ENCODE measurements at regions of chr15 and their contacts with region 1.

Region 1: DNA sequence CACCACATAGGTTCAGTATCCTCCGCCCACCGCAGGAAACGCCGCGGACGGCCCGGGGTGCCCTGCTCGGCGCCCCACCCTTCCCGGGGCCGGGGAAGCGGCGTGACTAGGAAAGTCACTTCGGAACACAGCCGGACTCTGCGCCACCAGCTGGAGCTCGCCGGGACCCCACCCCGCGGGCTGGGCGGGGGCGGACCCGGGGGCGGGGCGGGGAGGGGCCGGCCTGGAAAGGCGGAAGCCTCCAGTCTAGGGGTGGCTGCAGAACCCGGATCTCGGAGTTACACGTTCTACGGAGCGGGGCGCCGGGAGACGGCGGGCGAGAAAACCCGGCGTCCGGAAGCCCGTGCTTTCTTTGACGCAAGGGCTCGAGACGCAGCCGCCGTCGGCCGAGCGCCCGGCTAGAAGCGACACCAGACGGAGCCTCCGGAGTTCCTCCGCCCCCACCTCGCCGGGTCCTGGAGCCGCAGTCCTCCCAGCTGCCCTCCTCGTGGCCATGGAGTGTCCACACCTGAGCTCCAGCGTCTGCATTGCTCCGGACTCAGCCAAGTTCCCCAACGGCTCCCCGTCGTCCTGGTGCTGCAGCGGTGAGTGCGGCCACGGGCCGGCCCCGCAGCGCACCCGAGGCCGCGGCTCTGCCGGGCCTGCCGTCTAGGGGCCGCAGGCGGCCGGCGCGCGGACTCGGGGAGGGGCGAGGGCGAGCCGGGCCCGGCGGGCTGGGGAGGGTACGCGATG is at the start of gene USP3:
- DNase-seq: peak; percentile 93 to 95
- H3K4me3 ChIP-seq: peak within 1 kb of the TSS; percentile 97
- H3K4me3 Mint-ChIP-seq: peak within 1 kb of the TSS; percentile 83
- H3K27ac Mint-ChIP-seq: peak within 1 kb of the TSS; percentile 94
- H3K4me1 ChIP-seq: peaks cover 25% of the 10 kb centered on the region
- H3K4me1 Mint-ChIP-seq: peaks cover 32% of the 10 kb centered on the region
- H3K27me3 ChIP-seq: no peaks in the 10 kb centered on the region
- H3K27me3 Mint-ChIP-seq: no peaks in the 10 kb centered on the region
- CTCF ChIP-seq: peak; percentile 14 to 35
- total RNA-seq, gene USP3: 54.2 and 58.6 TPM in 2 replicates

Region 2: DNA sequence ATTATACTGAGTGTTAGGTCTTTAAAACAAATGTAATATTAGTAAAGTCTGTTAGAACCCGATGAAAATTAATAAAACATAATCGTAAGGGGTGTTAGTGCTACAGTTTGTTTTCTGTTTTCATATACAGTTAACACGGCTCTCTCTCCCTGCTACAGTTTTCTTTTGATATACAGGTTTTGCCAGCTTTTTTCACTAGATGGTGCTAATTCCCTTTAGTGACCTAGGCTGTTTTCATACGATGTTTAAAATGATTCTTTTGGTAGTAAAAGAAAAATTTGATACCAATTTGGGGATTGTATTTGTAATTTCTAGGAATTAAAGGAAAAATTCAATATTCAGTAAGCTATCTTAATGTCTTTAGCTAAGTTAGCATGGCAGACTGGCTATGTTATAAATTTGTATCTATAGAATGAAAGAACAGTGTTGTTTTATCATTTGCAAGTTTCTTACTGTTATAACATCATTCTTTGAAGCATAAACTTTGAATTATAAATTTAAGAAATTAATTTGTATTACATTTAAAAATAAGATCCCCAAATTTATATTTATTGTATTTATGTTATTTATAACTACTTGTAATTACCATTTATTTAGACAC is 215.5 kb before region 1 on chr15:
- CTCF ChIA-PET with region 1: no interaction called
- POLR2A ChIA-PET with region 1: no interaction called
- intact Hi-C with region 1: loop called (anchors 1 kb)
- DNase-seq: peak in 1 of 2 experiments; percentile 52
- H3K4me3 ChIP-seq: no peak overlapping the region
- H3K4me3 Mint-ChIP-seq: no peak overlapping the region
- H3K27ac Mint-ChIP-seq: no peak overlapping the region
- H3K4me1 ChIP-seq: no peaks in the 10 kb centered on the region
- H3K4me1 Mint-ChIP-seq: peaks cover 6% of the 10 kb centered on the region
- H3K27me3 ChIP-seq: no peaks in the 10 kb centered on the region
- H3K27me3 Mint-ChIP-seq: no peaks in the 10 kb centered on the region
- CTCF ChIP-seq: peak; percentile 50 to 57

Region 3: DNA sequence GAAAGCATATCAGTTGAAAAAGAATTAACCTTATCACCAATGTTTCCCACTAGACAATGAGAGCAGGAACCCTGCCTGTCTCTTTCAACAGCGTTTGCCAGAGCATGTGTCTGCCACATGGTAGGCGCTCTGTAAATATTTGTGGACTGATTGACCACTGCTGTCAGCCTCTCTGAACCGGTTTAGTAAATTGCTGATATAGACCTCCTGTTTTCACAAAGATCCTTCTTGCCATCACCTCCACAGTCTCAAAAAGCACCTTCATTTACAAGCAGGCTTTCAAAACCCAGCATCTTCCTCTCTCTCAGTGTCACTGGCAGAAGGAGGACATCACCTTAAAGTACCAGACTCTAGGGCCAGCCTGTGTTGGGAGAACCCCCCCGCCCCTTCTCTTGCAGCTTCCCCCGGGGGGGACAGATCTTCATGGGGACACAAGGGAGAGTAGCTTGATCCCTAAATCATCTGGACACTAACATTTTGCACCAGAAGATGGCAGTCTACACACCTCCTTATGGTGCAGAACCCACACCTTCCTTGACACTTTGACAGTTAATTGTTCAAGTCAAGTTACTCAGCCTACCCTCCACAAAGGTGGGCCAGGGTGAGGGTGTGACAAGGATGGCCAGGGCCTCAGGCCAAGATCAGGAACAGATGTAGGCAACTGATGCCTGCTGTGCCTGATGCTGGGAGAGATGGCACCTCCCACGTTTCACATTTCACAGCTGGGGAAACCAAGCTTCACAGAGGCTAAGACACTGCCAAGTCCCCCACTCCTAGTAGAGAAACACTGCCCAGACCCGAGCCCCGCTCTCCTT is 37.8 kb before region 1 on chr15:
- CTCF ChIA-PET with region 1: interaction called, 18 read pairs
- POLR2A ChIA-PET with region 1: interaction called, 4 read pairs
- intact Hi-C with region 1: no loop called
- DNase-seq: peak; percentile 53 to 68
- H3K4me3 ChIP-seq: no peak overlapping the region
- H3K4me3 Mint-ChIP-seq: peak overlapping the region; percentile 51
- H3K27ac Mint-ChIP-seq: peak overlapping the region; percentile 35
- H3K4me1 ChIP-seq: peaks cover 31% of the 10 kb centered on the region
- H3K4me1 Mint-ChIP-seq: peaks cover 27% of the 10 kb centered on the region
- H3K27me3 ChIP-seq: no peaks in the 10 kb centered on the region
- H3K27me3 Mint-ChIP-seq: no peaks in the 10 kb centered on the region
- CTCF ChIP-seq: peak; percentile 55 to 60

Region 4: GRCh38 chr15:63473999-63474809 is 30.2 kb before region 1 on chr15:
- CTCF ChIA-PET with region 1: interaction called, 4 read pairs
- POLR2A ChIA-PET with region 1: interaction called, 6 read pairs
- intact Hi-C with region 1: loop called (anchors 1 kb)
- DNase-seq: peak; percentile 82 to 92
- H3K4me3 ChIP-seq: no peak overlapping the region
- H3K4me3 Mint-ChIP-seq: peak overlapping the region; percentile 59
- H3K27ac Mint-ChIP-seq: peak overlapping the region; percentile 74
- H3K4me1 ChIP-seq: peaks cover 45% of the 10 kb centered on the region
- H3K4me1 Mint-ChIP-seq: peaks cover 43% of the 10 kb centered on the region
- H3K27me3 ChIP-seq: no peaks in the 10 kb centered on the region
- H3K27me3 Mint-ChIP-seq: no peaks in the 10 kb centered on the region
- CTCF ChIP-seq: peak in 1 of 2 experiments; percentile 23

Region 5: DNA sequence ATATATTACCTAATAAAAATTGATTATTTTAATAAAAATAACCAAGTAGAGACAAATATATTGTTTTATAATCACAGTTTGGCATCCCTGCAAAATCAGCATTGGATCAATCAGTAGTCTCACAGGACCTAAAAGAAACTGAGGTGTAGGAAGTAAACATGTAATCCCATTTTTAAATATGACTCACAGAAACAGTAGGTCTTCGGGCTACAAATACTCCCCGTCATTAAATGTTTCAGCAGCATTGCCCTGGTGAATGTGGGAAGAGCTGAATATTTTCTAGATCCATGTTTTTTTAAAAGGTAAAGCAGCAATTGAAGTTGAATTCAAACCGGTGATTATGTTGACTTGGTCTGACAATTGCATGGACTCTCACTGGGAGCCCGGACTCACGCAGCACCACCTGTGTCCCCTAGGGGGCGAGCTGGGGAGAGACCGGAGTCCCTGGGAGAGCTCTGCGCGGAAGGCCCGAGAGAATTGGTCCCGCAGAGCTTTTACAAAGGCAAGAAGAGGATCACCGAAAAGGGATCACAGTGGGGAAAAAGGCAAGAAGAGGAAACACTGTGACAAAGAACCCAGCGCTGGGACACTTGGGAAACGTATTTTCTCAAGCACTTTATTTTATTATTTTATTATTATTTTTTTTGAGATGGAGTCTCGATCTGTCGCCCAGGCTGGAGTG is 17.2 kb before region 1 on chr15:
- CTCF ChIA-PET with region 1: interaction called, 17 read pairs
- POLR2A ChIA-PET with region 1: no interaction called
- intact Hi-C with region 1: loop called (anchors 1 kb)
- DNase-seq: peak; percentile 78 to 88
- H3K4me3 ChIP-seq: no peak overlapping the region
- H3K4me3 Mint-ChIP-seq: no peak overlapping the region
- H3K27ac Mint-ChIP-seq: peak overlapping the region; percentile 45
- H3K4me1 ChIP-seq: no peaks in the 10 kb centered on the region
- H3K4me1 Mint-ChIP-seq: peaks cover 6% of the 10 kb centered on the region
- H3K27me3 ChIP-seq: no peaks in the 10 kb centered on the region
- H3K27me3 Mint-ChIP-seq: no peaks in the 10 kb centered on the region
- CTCF ChIP-seq: peak; percentile 71 to 84

Region 6: DNA sequence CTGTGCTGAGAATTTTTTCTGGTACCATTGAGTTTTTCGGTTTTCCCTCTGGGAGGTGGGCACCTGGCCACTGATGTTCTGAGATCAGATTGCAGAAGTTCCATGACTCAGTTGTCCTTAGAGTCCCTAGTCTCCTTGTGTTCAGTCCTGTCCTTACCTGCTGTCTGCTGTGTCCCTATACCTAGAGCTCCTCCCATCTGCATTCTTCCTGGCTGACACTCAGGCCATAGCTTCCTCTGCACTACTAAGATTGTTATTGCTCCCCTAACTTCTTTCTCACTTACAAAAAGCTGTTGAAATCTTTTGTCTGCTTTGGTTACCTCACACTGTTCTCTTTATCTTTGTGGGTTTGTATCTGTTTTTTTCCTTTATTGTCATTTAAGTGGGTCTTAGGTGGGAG is 13.2 kb after region 1 on chr15:
- CTCF ChIA-PET with region 1: interaction called, 5 read pairs
- POLR2A ChIA-PET with region 1: interaction called, 12 read pairs
- intact Hi-C with region 1: no loop called
- DNase-seq: no peak
- H3K4me3 ChIP-seq: no peak overlapping the region
- H3K4me3 Mint-ChIP-seq: no peak overlapping the region
- H3K27ac Mint-ChIP-seq: no peak overlapping the region
- H3K4me1 ChIP-seq: peaks cover 24% of the 10 kb centered on the region
- H3K4me1 Mint-ChIP-seq: peaks cover 41% of the 10 kb centered on the region
- H3K27me3 ChIP-seq: no peaks in the 10 kb centered on the region
- H3K27me3 Mint-ChIP-seq: no peaks in the 10 kb centered on the region
- CTCF ChIP-seq: no peak

Region 7: DNA sequence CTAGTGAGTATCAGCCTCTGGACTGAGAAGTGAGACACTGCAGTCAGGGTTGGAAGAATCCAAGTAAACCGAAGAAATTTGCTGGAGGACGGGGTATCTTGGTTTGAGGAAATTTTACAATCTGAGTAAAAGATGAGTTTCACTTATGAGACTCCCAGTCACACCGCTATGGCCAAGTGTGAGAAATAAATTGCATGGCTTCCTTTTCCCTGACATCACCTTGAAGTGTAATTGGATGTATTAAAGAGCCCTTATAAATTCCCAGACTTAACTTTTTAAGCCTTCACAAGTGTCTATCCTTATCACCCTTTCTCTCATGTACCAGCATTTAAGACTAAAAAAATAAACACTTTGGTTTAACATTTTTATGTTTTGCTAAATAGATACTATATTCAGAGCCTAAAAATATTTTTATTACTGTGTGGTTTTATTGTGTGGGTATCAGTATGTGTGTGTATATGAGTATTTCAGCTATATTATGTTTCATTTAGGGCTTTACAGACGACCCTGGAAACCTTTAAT is 23.8 kb after region 1 on chr15:
- CTCF ChIA-PET with region 1: no interaction called
- POLR2A ChIA-PET with region 1: no interaction called
- intact Hi-C with region 1: no loop called
- DNase-seq: no peak
- H3K4me3 ChIP-seq: no peak overlapping the region
- H3K4me3 Mint-ChIP-seq: no peak overlapping the region
- H3K27ac Mint-ChIP-seq: no peak overlapping the region
- H3K4me1 ChIP-seq: no peaks in the 10 kb centered on the region; the same call in 1 of the 2 replicates
- H3K4me1 Mint-ChIP-seq: peaks cover 22% of the 10 kb centered on the region
- H3K27me3 ChIP-seq: no peaks in the 10 kb centered on the region
- H3K27me3 Mint-ChIP-seq: no peaks in the 10 kb centered on the region
- CTCF ChIP-seq: no peak

Region 8: DNA sequence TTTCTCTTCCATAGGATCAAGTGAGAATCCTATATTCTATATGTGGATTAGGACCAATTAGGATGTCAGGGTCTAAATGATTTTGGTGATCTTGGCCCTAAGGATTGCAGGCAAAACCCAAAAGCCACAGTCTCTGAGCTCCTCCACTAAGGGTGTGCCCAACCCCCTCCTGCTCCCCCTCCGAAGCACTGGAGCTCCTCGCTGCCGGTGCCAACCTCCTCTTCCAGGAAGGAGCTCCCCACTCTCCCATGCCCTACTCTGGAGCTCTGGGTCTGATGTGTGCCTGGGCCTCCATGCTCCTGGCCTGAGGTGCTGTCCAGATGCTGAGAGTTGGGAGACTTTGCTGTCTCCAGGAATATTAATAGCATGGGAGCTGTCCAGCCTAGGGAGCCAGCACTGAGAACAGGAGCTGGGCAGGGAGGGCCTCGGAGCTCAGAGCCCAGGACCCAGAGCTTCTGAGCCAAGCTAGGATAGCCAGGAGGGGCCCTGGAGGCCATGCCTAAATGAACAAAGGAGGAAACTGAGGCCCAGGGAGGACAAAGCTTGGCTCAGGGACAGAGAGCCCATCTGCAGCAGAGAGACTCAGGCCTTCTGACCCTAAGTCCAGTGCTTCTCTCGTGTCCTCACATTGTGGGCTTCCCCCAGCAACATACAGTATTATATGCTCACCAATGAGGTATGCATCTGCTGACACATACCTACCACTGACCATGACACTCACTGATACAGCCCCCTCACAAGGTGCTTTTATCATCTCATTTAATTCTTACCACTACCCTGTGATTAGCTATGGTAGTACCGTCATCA is 366.2 kb after region 1 on chr15:
- CTCF ChIA-PET with region 1: no interaction called
- POLR2A ChIA-PET with region 1: no interaction called
- intact Hi-C with region 1: no loop called
- DNase-seq: peak; percentile 74 to 81
- H3K4me3 ChIP-seq: no peak overlapping the region
- H3K4me3 Mint-ChIP-seq: no peak overlapping the region
- H3K27ac Mint-ChIP-seq: no peak overlapping the region
- H3K4me1 ChIP-seq: peaks cover 16% of the 10 kb centered on the region; the same call in 1 of the 2 replicates
- H3K4me1 Mint-ChIP-seq: peaks cover 23% of the 10 kb centered on the region
- H3K27me3 ChIP-seq: no peaks in the 10 kb centered on the region
- H3K27me3 Mint-ChIP-seq: no peaks in the 10 kb centered on the region
- CTCF ChIP-seq: no peak

Region 9: GRCh38 chr15:64093627-64094417 is 589.4 kb after region 1 on chr15 and contains the start of gene CIAO2A:
- CTCF ChIA-PET with region 1: no interaction called
- POLR2A ChIA-PET with region 1: interaction called, 3 read pairs
- intact Hi-C with region 1: loop called (anchors 5 kb)
- DNase-seq: peak; percentile 94 to 98
- H3K4me3 ChIP-seq: peak within 1 kb of the TSS; percentile 74
- H3K4me3 Mint-ChIP-seq: peak within 1 kb of the TSS; percentile 99
- H3K27ac Mint-ChIP-seq: peak within 1 kb of the TSS; percentile 99
- H3K4me1 ChIP-seq: peaks cover 18% of the 10 kb centered on the region
- H3K4me1 Mint-ChIP-seq: peaks cover 18% of the 10 kb centered on the region
- H3K27me3 ChIP-seq: no peaks in the 10 kb centered on the region
- H3K27me3 Mint-ChIP-seq: no peaks in the 10 kb centered on the region
- CTCF ChIP-seq: no peak
- total RNA-seq, gene CIAO2A: 61.6 and 63.7 TPM in 2 replicates